ENCODE measurements at regions of chr17 and their contacts with region 1.

Region 1: DNA sequence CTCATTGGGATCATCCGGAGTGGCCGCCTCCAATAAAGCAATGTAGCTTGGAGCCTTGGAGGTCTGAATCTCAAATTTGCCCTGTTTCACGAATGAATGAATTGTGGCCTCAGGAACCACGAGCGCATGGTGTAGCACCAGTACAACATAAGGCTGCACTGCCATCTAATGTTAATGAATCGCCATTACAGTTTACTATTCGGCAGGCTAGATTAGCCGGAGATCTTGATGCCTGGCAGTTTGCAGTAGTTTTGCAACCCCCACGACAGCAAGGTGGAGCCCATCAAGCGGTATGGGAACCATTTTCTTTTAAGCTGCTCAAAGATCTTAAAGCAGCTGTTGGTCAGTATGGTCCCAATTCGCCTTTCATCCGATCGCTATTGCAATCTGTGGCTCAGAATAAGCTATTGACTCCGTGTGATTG is 18.8 kb downstream of the ALOX15B start:
- DNase-seq: peak in 4 of 10 donors; percentile 15 to 31 (median 24)

Region 2: GRCh38 chr17:7867881-7868329 is 189.8 kb before region 1 on chr17:
- intact Hi-C with region 1: loop called (anchors 5 kb)
- DNase-seq: no peak

Region 3: DNA sequence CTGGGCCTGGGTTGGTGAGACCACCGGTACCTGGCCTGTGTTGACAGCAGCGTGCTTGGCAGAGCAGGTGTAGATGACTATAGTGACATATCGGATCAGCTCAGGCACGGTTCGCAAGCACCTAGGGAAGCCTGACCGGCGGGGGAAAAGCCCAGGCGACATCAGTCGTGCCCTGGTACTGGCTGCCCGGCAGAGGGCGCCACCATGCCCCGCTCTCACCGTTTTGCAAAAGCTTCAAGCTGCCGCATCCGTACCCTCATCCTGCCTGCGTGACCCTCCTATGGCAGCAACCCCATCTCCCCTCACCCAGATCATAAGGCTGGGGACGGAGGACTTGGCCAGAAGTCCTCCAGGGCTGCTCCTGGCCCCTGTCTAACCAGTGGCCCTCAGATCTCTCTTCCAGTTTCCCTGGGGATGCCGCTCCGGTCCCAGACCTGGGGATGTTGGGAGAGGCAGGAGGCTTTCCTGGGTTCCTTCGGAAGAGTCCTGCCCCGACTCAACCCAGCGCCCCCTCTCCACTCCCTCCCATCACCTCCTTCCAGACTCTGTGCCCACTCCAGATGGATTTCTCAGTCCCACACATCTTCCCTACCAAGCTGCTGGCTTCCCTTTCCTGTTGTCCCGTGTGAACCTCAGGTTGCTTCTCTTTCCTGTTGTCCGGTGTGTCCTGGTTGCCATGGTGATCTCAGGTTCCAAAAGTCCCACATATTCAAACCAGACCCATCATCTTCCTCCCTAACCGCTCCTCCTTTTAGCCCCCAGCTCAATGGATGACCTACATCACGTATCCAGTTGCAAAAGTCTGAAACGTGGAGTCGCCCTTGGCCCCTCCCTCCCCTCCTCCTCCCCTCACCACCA is 16.2 kb after region 1 on chr17:
- intact Hi-C with region 1: no loop called
- DNase-seq: peak in 9 of 10 donors; percentile 43 to 95 (median 63)

Measured in posterior cingulate gyrus (tissue), 11 donors.